Activated CD4-positive, alpha-beta T cell treated with anti-CD3 and anti-CD28 coated beads for 36 hours (primary cell): ENCODE measurements at regions of chrX and their contacts with region 1.

Region 1: DNA sequence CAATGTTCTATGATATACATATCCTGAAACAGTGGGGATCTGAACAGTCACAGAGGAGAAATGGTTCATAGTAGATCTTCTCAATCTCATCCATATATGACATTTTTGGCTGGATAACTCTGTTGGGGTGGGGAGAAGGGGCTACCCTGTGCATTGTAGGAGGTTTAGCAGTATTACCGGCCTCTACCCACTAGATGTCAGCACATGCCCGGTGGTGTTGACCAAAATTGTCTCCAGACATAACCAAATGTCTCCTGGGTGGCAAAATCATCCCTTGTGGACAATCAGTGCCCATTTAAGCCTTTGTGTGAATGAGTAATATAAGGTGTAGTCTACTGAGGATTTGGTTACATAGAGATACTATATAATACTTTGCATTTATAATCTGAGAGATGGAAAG is 89.9 kb downstream of the PLS3 start:
- DNase-seq: peak; percentile 35
- ATAC-seq: peak; percentile 36
- H3K4me3 Mint-ChIP-seq: no peak overlapping the region
- H3K27ac Mint-ChIP-seq: no peak overlapping the region
- H3K4me1 Mint-ChIP-seq: no peaks in the 10 kb centered on the region
- H3K27me3 Mint-ChIP-seq: no peaks in the 10 kb centered on the region

Region 2: GRCh38 chrX:115665122-115665521 is 14.2 kb after region 1 on chrX:
- CTCF ChIA-PET with region 1: no interaction called
- POLR2A ChIA-PET with region 1: no interaction called
- intact Hi-C with region 1: no loop called
- DNase-seq: no peak
- ATAC-seq: no peak
- H3K4me3 Mint-ChIP-seq: no peak overlapping the region
- H3K27ac Mint-ChIP-seq: no peak overlapping the region
- H3K4me1 Mint-ChIP-seq: no peaks in the 10 kb centered on the region
- H3K27me3 Mint-ChIP-seq: no peaks in the 10 kb centered on the region

Region 3: DNA sequence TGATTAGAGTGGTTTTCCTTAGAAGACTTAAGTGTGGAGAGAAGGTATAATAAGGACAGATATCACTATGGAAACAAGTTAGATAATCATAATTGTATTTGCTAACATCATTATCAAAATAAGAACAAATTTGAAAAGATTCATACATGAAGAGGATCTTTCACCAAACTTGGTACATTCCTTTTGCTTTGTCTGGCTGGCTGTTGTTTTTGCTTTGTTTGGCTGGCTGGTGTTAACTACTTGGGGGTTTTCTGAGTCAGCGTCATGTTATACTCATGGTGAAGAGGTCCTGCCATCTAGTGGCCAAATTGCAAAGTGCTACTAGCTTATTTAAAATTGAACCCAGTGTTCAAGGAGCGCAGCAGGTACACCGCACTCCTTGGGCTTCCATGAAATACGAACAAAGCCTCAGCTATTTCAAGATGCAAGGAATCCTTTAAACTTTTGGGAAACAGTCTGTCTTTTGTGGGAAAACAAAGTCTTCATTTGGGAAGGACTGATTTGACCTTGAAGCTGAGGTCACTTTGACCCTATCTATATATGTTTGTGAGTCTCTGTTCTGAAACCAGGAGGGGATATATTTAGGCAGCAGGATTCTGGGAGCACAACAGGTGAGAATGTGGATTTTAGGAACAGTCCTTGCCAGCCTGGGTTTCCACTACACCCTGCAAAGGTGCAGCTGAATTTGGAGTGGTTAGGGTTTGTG is 39.7 kb after region 1 on chrX:
- CTCF ChIA-PET with region 1: interaction called, 10 read pairs
- POLR2A ChIA-PET with region 1: no interaction called
- intact Hi-C with region 1: loop called (anchors 1 to 2 kb)
- DNase-seq: peak; percentile 58
- ATAC-seq: peak; percentile 55
- H3K4me3 Mint-ChIP-seq: no peak overlapping the region
- H3K27ac Mint-ChIP-seq: no peak overlapping the region
- H3K4me1 Mint-ChIP-seq: no peaks in the 10 kb centered on the region
- H3K27me3 Mint-ChIP-seq: no peaks in the 10 kb centered on the region